Tibial artery (tissue), 4 donors: ENCODE measurements at regions of chr1 and their contacts with region 1.

Region 1: GRCh38 chr1:33181921-33182341 is at the start of gene TRIM62:
- DNase-seq: peak; percentile 81 to 93
- H3K4me3 ChIP-seq: peak within 1 kb of the TSS; percentile 77
- H3K27ac ChIP-seq: peak within 1 kb of the TSS; percentile 83 to 86
- H3K4me1 ChIP-seq: peaks cover 0 to 28% (median 8%) of the 10 kb centered on the region in 4 donors
- H3K27me3 ChIP-seq: peaks cover 0 to under 1% of the 10 kb centered on the region in 2 donors
- CTCF ChIP-seq: no peak

Region 2: GRCh38 chr1:33127792-33128130 is 54.2 kb before region 1 on chr1:
- intact Hi-C with region 1: loop called (anchors 2 kb)
- DNase-seq: no peak
- H3K4me3 ChIP-seq: peak overlapping the region; percentile 62 to 65
- H3K27ac ChIP-seq: peak overlapping the region; percentile 59 to 83
- H3K4me1 ChIP-seq: peaks cover 0 to 16% (median 7%) of the 10 kb centered on the region in 4 donors
- H3K27me3 ChIP-seq: no peaks in the 10 kb centered on the region
- CTCF ChIP-seq: no peak

Region 3: GRCh38 chr1:33268927-33269610 is 87.1 kb after region 1 on chr1:
- intact Hi-C with region 1: loop called (anchors 10 kb)
- DNase-seq: peak in 1 of 2 donors; percentile 51
- H3K4me3 ChIP-seq: no peak overlapping the region
- H3K27ac ChIP-seq: peak overlapping the region in 1 of 2 donors; percentile 46
- H3K4me1 ChIP-seq: peaks cover 0 to 97% (median 71%) of the 10 kb centered on the region in 4 donors
- H3K27me3 ChIP-seq: no peaks in the 10 kb centered on the region
- CTCF ChIP-seq: no peak